ENCODE measurements at regions of chr7 and their contacts with region 1.

Region 1: GRCh38 chr7:16811551-16811950 is 6.8 kb upstream of the AGR2 start:
- DNase-seq: no peak
- ATAC-seq: no peak
- H3K4me3 Mint-ChIP-seq: no peak overlapping the region
- H3K27ac Mint-ChIP-seq: no peak overlapping the region
- H3K4me1 Mint-ChIP-seq: no peaks in the 10 kb centered on the region
- H3K27me3 Mint-ChIP-seq: peaks cover 8% of the 10 kb centered on the region

Region 2: GRCh38 chr7:16786257-16786656 is 25.3 kb before region 1 on chr7:
- CTCF ChIA-PET with region 1: no interaction called
- POLR2A ChIA-PET with region 1: no interaction called
- intact Hi-C with region 1: loop called in 1 of 2 experiments (anchors 2 kb)
- DNase-seq: no peak
- ATAC-seq: no peak
- H3K4me3 Mint-ChIP-seq: no peak overlapping the region
- H3K27ac Mint-ChIP-seq: no peak overlapping the region
- H3K4me1 Mint-ChIP-seq: no peaks in the 10 kb centered on the region
- H3K27me3 Mint-ChIP-seq: no peaks in the 10 kb centered on the region

Measured in activated CD4-positive, alpha-beta T cell treated with anti-CD3 and anti-CD28 coated beads for 36 hours (primary cell).